Activated naive CD8-positive, alpha-beta T cell treated with anti-CD3 and anti-CD28 coated beads, Interleukin-2, amount 10 ng/mL, durations not matched to agents 7 days and 5 days (primary cell): ENCODE measurements at regions of chr17 and their contacts with region 1.

Region 1: DNA sequence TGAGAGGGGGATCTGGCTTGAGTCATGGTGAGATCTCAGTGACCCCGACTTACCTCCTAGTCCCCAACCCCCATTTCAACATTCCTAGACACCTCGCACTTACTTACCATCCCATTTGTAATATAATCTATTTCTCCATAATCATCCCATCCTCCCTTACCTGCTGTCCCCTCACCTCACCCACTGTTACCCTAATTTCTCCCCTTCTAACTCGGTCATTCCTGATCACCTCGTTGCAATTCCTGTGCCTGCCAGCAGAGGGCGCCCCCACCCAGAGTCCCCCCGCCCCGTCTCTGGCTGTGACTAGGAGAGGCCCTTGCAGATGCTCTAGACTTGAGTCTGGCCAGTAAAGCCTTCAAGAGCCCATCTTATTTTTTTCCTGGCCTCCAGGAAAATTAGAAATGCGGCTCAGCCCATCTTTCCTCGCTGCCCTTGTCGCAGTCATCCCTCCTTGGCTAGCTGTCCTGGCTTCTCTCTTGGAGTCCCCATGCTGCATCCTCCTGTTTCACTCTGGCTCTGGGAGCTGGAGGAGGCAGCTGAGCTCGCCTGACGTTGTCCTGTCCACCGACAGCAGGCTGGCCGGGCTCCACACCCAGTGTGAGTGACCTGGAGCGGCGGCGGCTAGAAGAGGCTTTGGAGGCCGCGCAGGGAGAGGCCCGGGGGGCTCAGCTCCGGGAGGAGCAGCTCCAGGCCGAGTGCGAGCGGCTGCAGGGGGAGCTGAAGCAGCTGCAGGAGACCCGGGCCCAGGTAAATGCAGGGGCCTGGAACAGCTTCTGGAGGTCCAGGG is 5.0 kb downstream of the TBKBP1 start:
- DNase-seq: peak; percentile 85
- ATAC-seq: peak; percentile 32
- H3K4me3 Mint-ChIP-seq: no peak overlapping the region
- H3K27ac Mint-ChIP-seq: peak overlapping the region; percentile 46
- H3K4me1 Mint-ChIP-seq: peaks cover 38% of the 10 kb centered on the region
- H3K27me3 Mint-ChIP-seq: peaks cover 3% of the 10 kb centered on the region

Region 2: GRCh38 chr17:47717261-47717697 is 18.3 kb after region 1 on chr17:
- POLR2A ChIA-PET with region 1: interaction called, 23 read pairs
- DNase-seq: peak; percentile 52
- ATAC-seq: peak; percentile 3
- H3K4me3 Mint-ChIP-seq: no peak overlapping the region
- H3K27ac Mint-ChIP-seq: peak overlapping the region; percentile 73
- H3K4me1 Mint-ChIP-seq: peaks cover 76% of the 10 kb centered on the region
- H3K27me3 Mint-ChIP-seq: no peaks in the 10 kb centered on the region